Breast epithelium (tissue), 4 donors: ENCODE measurements at regions of chr11 and their contacts with region 1.

Region 1: DNA sequence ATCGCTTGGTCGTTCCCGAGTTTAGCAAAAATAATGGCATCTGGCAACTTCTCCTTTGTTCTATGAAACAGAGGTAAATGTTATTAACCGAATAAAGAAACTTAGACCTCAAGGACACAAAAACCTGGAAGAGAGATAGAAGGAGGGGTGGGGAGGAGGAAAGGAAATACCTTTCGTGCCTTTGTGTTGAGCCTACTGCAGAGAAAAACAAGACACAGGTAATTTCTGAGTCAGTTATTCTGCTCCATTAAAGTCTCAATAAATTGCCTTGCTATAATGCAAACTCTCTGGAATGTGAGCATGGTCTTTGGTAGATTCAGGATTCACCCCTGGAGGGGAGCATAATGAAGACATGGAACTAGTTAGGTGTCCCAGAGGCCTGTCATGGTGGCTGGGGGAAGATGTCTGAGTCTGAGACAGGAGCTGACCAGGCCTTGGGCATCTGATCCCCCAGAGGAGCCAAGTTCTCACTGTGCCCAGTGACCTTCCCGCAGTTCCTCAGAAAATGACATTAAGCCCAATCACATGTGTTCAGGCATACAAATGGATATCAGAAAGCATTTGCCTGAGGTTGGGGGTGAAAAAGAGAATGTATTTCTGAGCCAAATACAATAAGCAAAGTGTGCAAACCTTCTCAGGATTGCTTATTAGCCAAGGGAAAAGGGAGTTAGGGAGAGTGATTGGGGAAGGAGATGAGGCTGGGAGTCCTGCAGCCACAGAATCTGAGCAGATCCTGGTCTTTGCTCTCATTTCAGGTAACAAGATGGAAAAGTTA is 72.6 kb upstream of the CADM1 start:
- DNase-seq: no peak
- H3K4me3 ChIP-seq: no peak overlapping the region
- H3K27ac ChIP-seq: peak overlapping the region; percentile 65 to 79
- H3K4me1 ChIP-seq: peaks cover 0 to 12% of the 10 kb centered on the region in 2 donors
- H3K27me3 ChIP-seq: no peaks in the 10 kb centered on the region
- CTCF ChIP-seq: no peak
- POLR2A ChIP-seq: no peak

Region 2: DNA sequence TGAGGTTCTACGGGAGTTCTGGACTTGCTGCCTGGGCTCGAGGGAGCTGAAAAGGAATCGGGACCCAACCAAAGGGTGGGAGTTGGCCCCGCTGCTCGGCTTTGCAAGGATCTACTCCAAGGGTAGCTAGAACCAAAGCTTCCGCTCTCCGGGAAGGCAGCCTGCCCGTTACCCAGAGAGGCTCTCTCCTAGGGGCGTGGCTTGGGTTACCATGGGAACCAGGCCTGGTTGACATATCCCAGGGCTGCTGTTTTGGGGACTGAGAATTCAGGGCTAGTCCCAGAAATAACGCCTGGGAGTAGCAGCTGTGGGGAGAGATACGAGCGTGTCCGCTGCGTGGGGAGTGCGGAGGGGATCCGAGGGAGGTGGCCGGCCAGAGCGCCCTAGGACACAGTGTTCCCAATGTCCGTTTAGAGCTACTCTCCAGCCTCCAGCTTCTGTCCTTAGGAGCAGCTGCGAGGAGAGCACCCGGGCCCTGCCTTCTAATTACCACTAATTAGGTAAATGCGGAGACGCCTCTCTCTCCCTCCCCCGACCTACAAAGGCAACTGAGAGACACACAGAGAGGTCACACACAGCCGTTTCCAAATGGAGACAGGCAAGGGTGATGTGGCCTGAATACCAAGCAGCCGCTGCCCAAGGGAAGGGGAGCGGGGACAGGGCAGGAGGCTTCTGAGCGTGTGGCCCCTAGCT is 69.0 kb after region 1 on chr11:
- intact Hi-C with region 1: loop called (anchors 2 kb)
- DNase-seq: no peak
- H3K4me3 ChIP-seq: no peak overlapping the region
- H3K27ac ChIP-seq: no peak overlapping the region
- H3K4me1 ChIP-seq: no peaks in the 10 kb centered on the region
- H3K27me3 ChIP-seq: peaks cover 0 to 8% of the 10 kb centered on the region in 2 donors
- CTCF ChIP-seq: no peak
- POLR2A ChIP-seq: no peak